ENCODE measurements at regions of chr1 and their contacts with region 1.

Region 1: GRCh38 chr1:205396967-205397616 is 24.8 kb downstream of the LEMD1 start:
- DNase-seq: peak in 6 of 7 donors; percentile 33 to 67 (median 52)
- H3K4me3 ChIP-seq: no peak overlapping the region
- H3K27ac ChIP-seq: no peak overlapping the region
- H3K4me1 ChIP-seq: no peaks in the 10 kb centered on the region
- H3K27me3 ChIP-seq: no peaks in the 10 kb centered on the region
- CTCF ChIP-seq: peak; percentile 71 to 88 (median 82)
- POLR2A ChIP-seq: no peak

Region 2: DNA sequence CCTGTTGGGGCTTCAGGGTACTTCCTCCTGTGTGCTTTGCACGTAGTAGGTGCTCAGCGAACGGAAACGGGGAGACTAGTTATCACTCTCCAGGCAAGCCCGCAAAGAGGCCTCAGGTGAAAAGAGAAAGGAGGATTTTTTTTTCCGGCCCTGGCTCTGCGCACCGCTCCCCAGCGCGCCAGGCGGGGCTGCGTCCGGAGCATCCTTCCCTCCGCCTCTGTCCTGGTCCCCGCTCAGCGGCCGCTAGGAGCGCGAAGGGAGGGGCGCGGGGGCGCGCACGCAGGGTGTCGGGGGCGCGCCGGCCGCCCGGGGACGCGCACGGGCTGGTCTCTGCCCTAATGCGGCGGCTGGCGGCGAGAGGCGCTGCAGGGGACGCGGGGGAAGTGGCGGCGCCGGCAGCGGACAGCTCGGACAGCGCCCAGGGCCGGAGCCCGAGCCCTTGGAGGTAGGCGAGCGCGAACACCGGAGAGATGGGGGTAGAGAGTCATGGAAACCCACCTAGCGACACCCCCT is 568.7 kb before region 1 on chr1:
- intact Hi-C with region 1: no loop called
- DNase-seq: peak; percentile 64 to 85 (median 69)
- H3K4me3 ChIP-seq: peak overlapping the region in 2 of 4 donors; percentile 6 to 59
- H3K27ac ChIP-seq: peak overlapping the region in 2 of 5 donors; percentile 57 to 86
- H3K4me1 ChIP-seq: no peaks in the 10 kb centered on the region
- H3K27me3 ChIP-seq: no peaks in the 10 kb centered on the region
- CTCF ChIP-seq: peak in 3 of 6 experiments; percentile 26 to 48 (median 28)
- POLR2A ChIP-seq: peak; percentile 40 to 57

Region 3: GRCh38 chr1:205321164-205321958 is 75.7 kb before region 1 on chr1 and contains the start of gene NUAK2:
- intact Hi-C with region 1: no loop called
- DNase-seq: peak; percentile 92 to 97 (median 94)
- H3K4me3 ChIP-seq: peak within 1 kb of the TSS; percentile 43 to 89 (median 81)
- H3K27ac ChIP-seq: peak within 1 kb of the TSS in 4 of 5 donors; percentile 62 to 84 (median 82)
- H3K4me1 ChIP-seq: peaks cover 30 to 50% of the 10 kb centered on the region in 2 donors
- H3K27me3 ChIP-seq: no peaks in the 10 kb centered on the region
- CTCF ChIP-seq: peak in 5 of 6 experiments; percentile 14 to 30 (median 25)
- POLR2A ChIP-seq: peak in 1 of 2 donors; percentile 94
- total RNA-seq, gene NUAK2: 1.2 to 9.9 (median 6.7) TPM

Region 4: DNA sequence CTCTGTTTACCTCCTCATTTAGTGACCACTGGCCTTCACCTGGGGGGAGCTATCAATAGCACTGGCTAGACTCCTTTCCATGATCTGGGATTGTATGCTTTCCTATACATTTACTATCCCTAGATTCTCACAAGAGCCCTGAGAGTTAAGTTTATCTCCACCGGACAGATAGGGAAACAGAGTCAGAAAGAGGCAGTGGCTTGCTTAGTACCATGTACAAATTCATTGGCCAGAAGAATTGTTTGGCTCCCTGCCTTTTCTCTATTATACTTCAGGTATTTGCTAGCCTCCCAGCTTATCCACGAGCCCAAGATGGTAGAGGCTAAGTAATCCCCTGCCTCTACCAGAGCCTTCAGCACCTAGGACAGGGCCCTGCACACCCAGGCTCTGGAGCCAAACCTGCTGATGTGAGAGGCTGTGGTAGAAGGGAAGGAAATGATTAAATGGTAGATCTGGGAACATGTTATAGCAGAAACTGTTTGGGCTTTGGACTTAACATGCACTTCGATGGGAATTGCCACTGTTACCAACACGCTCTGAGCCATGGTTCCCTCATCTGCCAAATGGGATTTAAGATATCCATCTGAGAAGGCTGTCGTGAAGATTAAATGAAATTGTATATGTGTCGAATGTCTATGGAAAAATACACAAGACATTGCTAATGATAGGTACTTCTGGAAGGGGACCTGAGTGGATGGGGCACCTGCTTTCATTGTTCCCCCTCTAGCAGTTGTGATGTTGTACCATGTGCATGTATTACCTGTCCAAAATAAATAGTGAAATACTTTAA is 61.9 kb after region 1 on chr1:
- intact Hi-C with region 1: no loop called
- DNase-seq: peak in 5 of 7 donors; percentile 38 to 52 (median 47)
- H3K4me3 ChIP-seq: no peak overlapping the region
- H3K27ac ChIP-seq: no peak overlapping the region
- H3K4me1 ChIP-seq: peaks cover 0 to 21% of the 10 kb centered on the region in 2 donors
- H3K27me3 ChIP-seq: peaks cover 46% of the 10 kb centered on the region
- CTCF ChIP-seq: no peak
- POLR2A ChIP-seq: no peak

Region 5: DNA sequence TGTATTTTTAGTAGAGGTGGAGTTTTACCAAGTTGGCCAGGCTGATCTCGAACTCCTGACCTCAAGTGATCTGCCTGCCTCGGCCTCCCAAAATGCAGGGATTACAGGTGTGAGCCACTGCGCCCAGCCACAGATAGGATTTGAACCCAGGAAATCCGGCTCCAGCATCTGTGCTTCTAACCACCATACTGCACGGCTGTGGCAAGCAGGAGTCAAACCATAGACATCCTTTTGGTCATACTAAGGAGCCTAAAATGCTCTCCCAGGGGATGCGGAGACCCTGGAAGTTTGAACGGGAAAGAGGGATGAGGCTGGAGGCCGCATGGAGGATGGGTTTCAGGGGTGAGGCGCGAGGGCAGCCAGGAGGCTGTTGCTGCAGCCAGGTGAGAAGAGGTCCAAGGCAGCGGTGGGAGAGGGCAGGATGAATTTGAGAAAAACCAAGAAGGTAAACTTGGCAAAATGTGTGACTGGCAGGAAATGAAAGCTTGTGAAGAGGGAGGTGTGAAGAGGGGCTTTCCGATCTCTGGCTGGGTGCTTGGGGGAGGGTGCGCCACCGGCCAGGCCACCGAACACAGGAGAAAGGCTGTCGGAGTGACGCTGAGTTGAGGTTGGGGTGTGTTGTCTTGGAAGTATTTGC is 83.4 kb after region 1 on chr1:
- intact Hi-C with region 1: loop called (anchors 5 kb)
- DNase-seq: no peak
- H3K4me3 ChIP-seq: no peak overlapping the region
- H3K27ac ChIP-seq: no peak overlapping the region
- H3K4me1 ChIP-seq: no peaks in the 10 kb centered on the region
- H3K27me3 ChIP-seq: no peaks in the 10 kb centered on the region
- CTCF ChIP-seq: no peak
- POLR2A ChIP-seq: no peak

Region 6: DNA sequence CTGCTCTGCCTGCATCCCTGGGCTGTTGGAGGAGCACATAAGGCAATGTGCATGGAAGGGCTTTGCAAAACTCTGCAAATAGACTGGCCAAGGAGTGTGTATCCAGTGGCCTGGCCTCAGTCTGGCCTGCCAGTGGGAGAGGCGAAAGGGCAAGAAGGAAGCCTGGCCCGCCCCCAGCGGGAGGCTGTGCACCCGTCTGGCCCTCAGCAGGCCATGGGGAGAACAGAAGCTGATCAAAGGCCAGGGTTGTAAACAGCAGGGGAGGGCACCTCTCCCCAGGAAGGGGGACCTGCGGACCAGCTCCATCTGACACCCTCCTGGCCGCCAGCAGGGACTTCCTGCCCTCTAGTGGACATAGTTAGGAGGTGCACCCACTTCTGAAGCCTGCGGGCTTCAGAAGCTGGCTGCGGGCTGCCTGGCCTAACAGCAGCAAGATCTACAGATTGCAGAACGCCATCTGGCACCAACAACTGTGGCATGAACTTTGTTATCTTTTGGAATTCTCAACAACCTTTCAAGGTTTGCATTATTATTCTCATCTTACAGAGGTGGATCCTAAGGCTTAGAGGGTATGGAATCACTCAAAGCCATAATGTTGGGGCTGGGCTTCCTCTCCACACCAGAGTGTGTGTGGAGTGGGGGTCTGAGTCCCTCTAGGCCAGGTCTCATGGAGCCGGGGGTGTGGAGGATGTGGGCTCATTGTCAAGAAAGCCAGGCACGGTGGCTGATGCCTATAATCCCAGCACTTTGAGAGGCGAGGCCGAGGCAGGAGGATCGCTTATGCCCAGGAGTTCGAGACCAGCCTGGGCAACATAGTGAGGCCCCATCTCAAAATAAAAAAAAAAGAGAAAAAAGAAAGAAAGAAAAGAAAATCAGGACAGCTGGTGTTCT is 88.5 kb after region 1 on chr1:
- intact Hi-C with region 1: loop called (anchors 5 kb)
- DNase-seq: peak; percentile 64 to 87 (median 79)
- H3K4me3 ChIP-seq: no peak overlapping the region
- H3K27ac ChIP-seq: no peak overlapping the region
- H3K4me1 ChIP-seq: no peaks in the 10 kb centered on the region
- H3K27me3 ChIP-seq: no peaks in the 10 kb centered on the region
- CTCF ChIP-seq: peak; percentile 89 to 98 (median 94)
- POLR2A ChIP-seq: no peak

Region 7: GRCh38 chr1:205528887-205529825 is 132.1 kb after region 1 on chr1:
- intact Hi-C with region 1: loop called in 1 of 2 experiments (anchors 10 kb)
- DNase-seq: peak; percentile 57 to 86 (median 81)
- H3K4me3 ChIP-seq: peak overlapping the region in 1 of 4 donors; percentile 29
- H3K27ac ChIP-seq: no peak overlapping the region
- H3K4me1 ChIP-seq: no peaks in the 10 kb centered on the region
- H3K27me3 ChIP-seq: no peaks in the 10 kb centered on the region
- CTCF ChIP-seq: peak; percentile 73 to 97 (median 86)
- POLR2A ChIP-seq: no peak